ENCODE measurements at regions of chr14 and their contacts with region 1.

Region 1: GRCh38 chr14:73503648-73504047 is 12.9 kb downstream of the RIOX1 start:
- DNase-seq: no peak
- H3K4me3 Mint-ChIP-seq: no peak overlapping the region
- H3K27ac Mint-ChIP-seq: no peak overlapping the region
- H3K4me1 Mint-ChIP-seq: no peaks in the 10 kb centered on the region
- H3K27me3 Mint-ChIP-seq: no peaks in the 10 kb centered on the region
- CTCF ChIP-seq: no peak

Region 2: GRCh38 chr14:73422515-73422914 is 81.1 kb before region 1 on chr14:
- CTCF ChIA-PET with region 1: no interaction called
- POLR2A ChIA-PET with region 1: no interaction called
- intact Hi-C with region 1: no loop called
- DNase-seq: no peak
- H3K4me3 Mint-ChIP-seq: no peak overlapping the region
- H3K27ac Mint-ChIP-seq: no peak overlapping the region
- H3K4me1 Mint-ChIP-seq: peaks cover 11% of the 10 kb centered on the region
- H3K27me3 Mint-ChIP-seq: no peaks in the 10 kb centered on the region
- CTCF ChIP-seq: no peak

Region 3: GRCh38 chr14:73521229-73521628 is 17.6 kb after region 1 on chr14:
- CTCF ChIA-PET with region 1: interaction called, 43 read pairs
- POLR2A ChIA-PET with region 1: interaction called, 3 read pairs
- intact Hi-C with region 1: no loop called
- DNase-seq: no peak
- H3K4me3 Mint-ChIP-seq: no peak overlapping the region
- H3K27ac Mint-ChIP-seq: no peak overlapping the region
- H3K4me1 Mint-ChIP-seq: peaks cover 8% of the 10 kb centered on the region
- H3K27me3 Mint-ChIP-seq: no peaks in the 10 kb centered on the region
- CTCF ChIP-seq: no peak

Region 4: GRCh38 chr14:73568381-73568781 is 64.7 kb after region 1 on chr14:
- CTCF ChIA-PET with region 1: interaction called, 32 read pairs
- POLR2A ChIA-PET with region 1: interaction called, 12 read pairs
- intact Hi-C with region 1: no loop called
- DNase-seq: peak; percentile 34
- H3K4me3 Mint-ChIP-seq: peak overlapping the region; percentile 93
- H3K27ac Mint-ChIP-seq: peak overlapping the region; percentile 88
- H3K4me1 Mint-ChIP-seq: peaks cover 9% of the 10 kb centered on the region
- H3K27me3 Mint-ChIP-seq: no peaks in the 10 kb centered on the region
- CTCF ChIP-seq: no peak

Region 5: GRCh38 chr14:73633116-73634010 is 129.7 kb after region 1 on chr14:
- CTCF ChIA-PET with region 1: interaction called, 162 read pairs
- POLR2A ChIA-PET with region 1: interaction called, 11 read pairs
- intact Hi-C with region 1: loop called (anchors 1 kb)
- DNase-seq: peak; percentile 80
- H3K4me3 Mint-ChIP-seq: peak overlapping the region; percentile 60
- H3K27ac Mint-ChIP-seq: no peak overlapping the region
- H3K4me1 Mint-ChIP-seq: peaks cover 4% of the 10 kb centered on the region
- H3K27me3 Mint-ChIP-seq: no peaks in the 10 kb centered on the region
- CTCF ChIP-seq: peak; percentile 87

Region 6: GRCh38 chr14:74038015-74038859 is 534.6 kb after region 1 on chr14:
- CTCF ChIA-PET with region 1: no interaction called
- POLR2A ChIA-PET with region 1: no interaction called
- intact Hi-C with region 1: loop called (anchors 5 kb)
- DNase-seq: peak; percentile 65
- H3K4me3 Mint-ChIP-seq: no peak overlapping the region
- H3K27ac Mint-ChIP-seq: no peak overlapping the region
- H3K4me1 Mint-ChIP-seq: no peaks in the 10 kb centered on the region
- H3K27me3 Mint-ChIP-seq: no peaks in the 10 kb centered on the region
- CTCF ChIP-seq: peak; percentile 76